Caco-2 (cell line): ENCODE measurements at regions of chr9 and their contacts with region 1.

Region 1: GRCh38 chr9:613771-614347 is 227.6 kb upstream of the DMRT1 start:
- DNase-seq: peak; percentile 67 to 71
- H3K4me3 ChIP-seq: no peak overlapping the region
- H3K4me3 Mint-ChIP-seq: no peak overlapping the region
- H3K27ac Mint-ChIP-seq: no peak overlapping the region
- H3K4me1 ChIP-seq: peaks cover 40% of the 10 kb centered on the region
- H3K4me1 Mint-ChIP-seq: peaks cover 16% of the 10 kb centered on the region
- H3K27me3 ChIP-seq: no peaks in the 10 kb centered on the region
- H3K27me3 Mint-ChIP-seq: no peaks in the 10 kb centered on the region
- CTCF ChIP-seq: peak; percentile 53 to 65

Region 2: GRCh38 chr9:347667-348292 is 266.1 kb before region 1 on chr9:
- CTCF ChIA-PET with region 1: no interaction called
- POLR2A ChIA-PET with region 1: no interaction called
- intact Hi-C with region 1: loop called (anchors 5 kb)
- DNase-seq: peak in 1 of 2 experiments; percentile 49
- H3K4me3 ChIP-seq: no peak overlapping the region
- H3K4me3 Mint-ChIP-seq: no peak overlapping the region
- H3K27ac Mint-ChIP-seq: no peak overlapping the region
- H3K4me1 ChIP-seq: no peaks in the 10 kb centered on the region
- H3K4me1 Mint-ChIP-seq: no peaks in the 10 kb centered on the region
- H3K27me3 ChIP-seq: no peaks in the 10 kb centered on the region
- H3K27me3 Mint-ChIP-seq: no peaks in the 10 kb centered on the region
- CTCF ChIP-seq: peak; percentile 67 to 77

Region 3: DNA sequence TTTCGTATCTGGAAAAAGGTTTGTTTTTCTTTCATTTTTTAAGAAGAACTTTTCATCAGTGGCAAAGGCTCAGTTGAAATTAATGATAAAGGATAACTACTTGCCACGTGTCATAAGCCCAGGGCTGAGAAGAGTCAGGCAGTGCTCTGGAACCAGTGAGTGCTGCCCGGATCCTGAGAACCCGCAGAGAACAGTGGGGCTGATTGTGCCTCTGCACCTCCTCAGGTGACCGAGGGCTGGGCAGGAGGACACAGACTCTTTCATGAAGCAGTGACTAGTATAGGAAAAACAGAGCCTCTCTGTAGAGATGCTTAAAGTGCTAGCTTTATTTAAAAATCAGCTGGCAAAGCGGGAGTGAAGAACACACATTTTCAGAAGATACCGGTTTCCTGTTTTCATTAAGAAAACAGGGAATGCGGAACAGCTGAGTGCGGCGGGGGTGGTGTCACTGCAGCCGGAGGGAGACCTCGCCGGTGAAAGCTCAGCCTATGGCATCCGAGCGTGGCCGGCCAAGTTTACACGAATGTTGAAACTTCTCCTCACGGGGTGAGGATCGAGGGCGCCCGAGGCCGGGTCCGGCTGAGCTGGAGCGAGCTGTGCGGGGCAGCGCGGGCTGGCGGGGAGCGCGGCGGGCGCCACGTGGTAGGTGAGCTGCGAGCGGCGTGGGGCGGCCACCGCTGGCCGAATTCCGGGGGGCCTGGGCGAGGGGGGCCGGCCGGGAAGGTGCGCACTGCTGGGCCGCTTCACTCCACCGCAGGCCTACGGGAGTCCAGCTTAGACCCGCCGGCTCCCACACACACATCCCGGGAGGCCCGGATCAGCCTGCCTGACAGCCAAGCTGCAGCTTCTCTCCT is 93.0 kb after region 1 on chr9:
- CTCF ChIA-PET with region 1: no interaction called
- POLR2A ChIA-PET with region 1: no interaction called
- intact Hi-C with region 1: loop called (anchors 2 kb)
- DNase-seq: peak; percentile 62 to 63
- H3K4me3 ChIP-seq: peak overlapping the region; percentile 57
- H3K4me3 Mint-ChIP-seq: peak overlapping the region; percentile 97
- H3K27ac Mint-ChIP-seq: peak overlapping the region; percentile 95
- H3K4me1 ChIP-seq: peaks cover 32% of the 10 kb centered on the region
- H3K4me1 Mint-ChIP-seq: peaks cover 23% of the 10 kb centered on the region
- H3K27me3 ChIP-seq: no peaks in the 10 kb centered on the region
- H3K27me3 Mint-ChIP-seq: no peaks in the 10 kb centered on the region
- CTCF ChIP-seq: no peak

Region 4: GRCh38 chr9:757246-757881 is 143.5 kb after region 1 on chr9:
- CTCF ChIA-PET with region 1: no interaction called
- POLR2A ChIA-PET with region 1: no interaction called
- intact Hi-C with region 1: loop called (anchors 2 kb)
- DNase-seq: peak; percentile 54
- H3K4me3 ChIP-seq: no peak overlapping the region
- H3K4me3 Mint-ChIP-seq: no peak overlapping the region
- H3K27ac Mint-ChIP-seq: no peak overlapping the region
- H3K4me1 ChIP-seq: peaks cover 5% of the 10 kb centered on the region; the same call in 1 of the 2 replicates
- H3K4me1 Mint-ChIP-seq: peaks cover 9% of the 10 kb centered on the region
- H3K27me3 ChIP-seq: no peaks in the 10 kb centered on the region
- H3K27me3 Mint-ChIP-seq: no peaks in the 10 kb centered on the region
- CTCF ChIP-seq: peak; percentile 36 to 37

Region 5: DNA sequence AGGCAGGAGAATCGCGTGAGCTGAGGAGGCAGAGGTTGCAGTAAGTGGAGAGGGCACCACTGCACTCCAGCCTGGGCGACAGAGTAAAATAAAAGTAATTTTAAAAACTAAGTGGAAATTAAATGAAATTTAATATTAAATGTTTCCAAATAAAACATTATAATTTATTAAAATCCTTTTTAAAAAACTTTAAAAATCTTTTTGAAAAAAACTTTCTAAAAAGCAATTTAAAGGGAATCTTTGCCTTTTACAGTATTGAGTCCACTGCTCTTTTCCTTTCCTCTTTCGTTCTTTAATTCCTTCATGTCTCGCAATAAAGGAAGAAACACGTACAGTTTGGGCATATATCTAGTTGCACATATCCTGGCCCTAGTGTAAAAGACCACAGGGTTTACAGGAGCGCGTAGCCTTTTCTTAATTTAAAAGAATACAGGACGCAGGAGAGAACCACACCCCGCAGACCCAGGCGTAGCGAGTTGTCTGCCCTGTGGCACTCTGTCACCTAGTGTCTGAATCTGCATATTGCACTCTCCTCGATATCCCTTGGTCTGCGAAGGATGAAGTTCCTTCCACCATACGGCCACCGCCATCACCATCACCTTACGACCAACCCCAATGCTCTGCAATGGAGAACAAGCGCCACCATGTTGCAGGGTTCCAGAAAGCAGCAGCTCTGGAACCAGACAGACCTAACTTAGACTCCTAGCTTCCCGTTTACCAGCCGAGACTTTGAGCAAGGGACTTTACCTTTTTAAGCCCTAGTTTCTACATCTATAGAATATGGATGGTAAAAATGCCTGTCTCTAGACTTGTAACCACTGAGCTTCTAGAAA is 150.0 kb after region 1 on chr9:
- CTCF ChIA-PET with region 1: no interaction called
- POLR2A ChIA-PET with region 1: no interaction called
- intact Hi-C with region 1: loop called (anchors 1 kb)
- DNase-seq: peak; percentile 79 to 82
- H3K4me3 ChIP-seq: no peak overlapping the region
- H3K4me3 Mint-ChIP-seq: no peak overlapping the region
- H3K27ac Mint-ChIP-seq: no peak overlapping the region
- H3K4me1 ChIP-seq: no peaks in the 10 kb centered on the region; the same call in 1 of the 2 replicates
- H3K4me1 Mint-ChIP-seq: peaks cover 21% of the 10 kb centered on the region
- H3K27me3 ChIP-seq: no peaks in the 10 kb centered on the region
- H3K27me3 Mint-ChIP-seq: no peaks in the 10 kb centered on the region
- CTCF ChIP-seq: peak; percentile 61 to 65

Region 6: DNA sequence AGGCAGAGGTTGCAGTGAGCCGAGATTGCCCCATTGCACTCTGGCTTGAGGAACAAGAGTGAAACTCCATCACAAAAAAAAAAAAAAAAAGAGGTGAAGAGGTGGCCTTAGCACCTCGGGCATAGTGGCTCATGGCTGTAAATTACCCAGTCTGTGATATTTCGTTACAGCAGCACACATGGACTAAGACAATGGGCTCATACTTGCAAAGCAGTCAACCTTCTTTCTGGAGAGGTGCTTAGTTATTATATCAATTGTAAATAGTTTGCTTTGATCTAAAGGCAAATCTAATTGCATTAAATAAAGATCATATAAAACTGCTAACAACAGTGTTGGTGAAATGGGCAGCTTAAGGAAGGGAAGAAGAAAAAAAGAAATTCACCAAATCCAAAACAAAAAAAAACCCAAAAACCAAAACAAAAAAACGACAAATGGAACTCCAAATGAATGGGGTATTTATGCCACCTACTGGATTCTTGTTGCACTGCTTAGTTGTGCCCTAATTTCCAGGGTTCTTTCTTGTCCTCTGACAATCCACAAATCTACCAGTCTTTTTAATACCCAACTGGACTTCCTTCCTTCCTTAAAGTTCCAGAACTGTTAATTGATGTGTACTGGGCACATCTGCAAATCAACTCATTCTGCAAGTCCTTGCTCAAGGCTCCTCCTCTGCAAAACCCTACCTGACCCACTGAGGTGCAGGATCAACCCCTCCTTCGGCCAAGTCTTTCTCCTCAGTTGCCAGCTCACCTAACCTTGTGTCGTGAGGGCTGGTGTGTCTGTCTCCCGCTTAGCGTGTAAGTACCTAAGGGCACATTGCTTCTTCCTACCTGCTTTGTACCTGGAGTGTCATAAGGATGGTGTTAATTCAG is 192.7 kb after region 1 on chr9:
- CTCF ChIA-PET with region 1: interaction called, 3 read pairs
- POLR2A ChIA-PET with region 1: no interaction called
- intact Hi-C with region 1: loop called (anchors 2 kb)
- DNase-seq: peak in 1 of 2 experiments; percentile 27
- H3K4me3 ChIP-seq: no peak overlapping the region
- H3K4me3 Mint-ChIP-seq: no peak overlapping the region
- H3K27ac Mint-ChIP-seq: no peak overlapping the region
- H3K4me1 ChIP-seq: no peaks in the 10 kb centered on the region
- H3K4me1 Mint-ChIP-seq: peaks cover 5% of the 10 kb centered on the region
- H3K27me3 ChIP-seq: no peaks in the 10 kb centered on the region
- H3K27me3 Mint-ChIP-seq: no peaks in the 10 kb centered on the region
- CTCF ChIP-seq: peak; percentile 58 to 63